AG04450 (cell line): ENCODE measurements at regions of chr2 and their contacts with region 1.

Region 1: DNA sequence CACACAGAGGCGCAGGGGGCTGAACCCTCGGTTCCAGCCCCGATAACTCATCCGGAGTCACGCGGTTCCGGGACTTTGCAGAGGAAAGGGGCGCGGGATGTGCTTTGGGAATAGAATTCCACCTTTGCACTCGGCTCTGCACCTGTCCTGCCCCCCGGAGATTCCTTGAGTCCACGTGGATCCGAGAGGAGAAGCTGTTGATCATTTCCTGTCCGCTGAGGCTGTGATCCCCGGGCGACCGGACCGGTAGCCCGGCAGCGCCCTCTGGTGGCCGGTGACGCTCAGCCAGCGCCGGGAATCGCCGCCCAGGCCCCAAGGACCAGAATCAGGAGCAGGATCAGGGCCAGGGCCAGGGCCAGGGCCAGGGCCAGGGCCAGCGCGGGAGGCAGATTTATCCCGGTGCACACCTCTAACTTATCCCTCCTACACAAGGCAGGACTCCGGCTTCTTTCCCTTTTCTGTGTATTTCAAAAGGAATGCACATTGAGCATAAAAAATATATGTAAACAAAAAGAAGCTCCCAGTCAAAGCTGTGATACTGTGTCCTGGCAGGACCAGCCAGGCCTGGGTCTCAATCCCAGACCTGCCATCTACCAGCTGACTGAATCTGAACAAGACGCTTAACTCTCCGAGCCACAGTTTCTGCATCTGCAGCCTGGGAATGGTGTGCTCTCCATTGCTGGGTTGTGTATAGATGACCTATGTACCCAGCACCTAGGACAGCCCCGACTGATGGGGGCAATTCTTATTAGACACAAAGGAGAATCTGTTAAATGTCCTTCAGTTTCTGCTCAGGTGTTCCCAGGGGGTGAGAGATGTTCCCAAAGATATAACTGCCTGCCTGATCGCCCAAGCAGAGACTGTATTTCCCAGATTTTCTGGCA is 8.5 kb upstream of the SPATA3 start:
- DNase-seq: peak; percentile 15
- H3K4me3 ChIP-seq: peak overlapping the region; percentile 56
- H3K27ac ChIP-seq: no peak overlapping the region
- H3K27me3 ChIP-seq: peaks cover 28% of the 10 kb centered on the region
- CTCF ChIP-seq: peak; percentile 91

Region 2: DNA sequence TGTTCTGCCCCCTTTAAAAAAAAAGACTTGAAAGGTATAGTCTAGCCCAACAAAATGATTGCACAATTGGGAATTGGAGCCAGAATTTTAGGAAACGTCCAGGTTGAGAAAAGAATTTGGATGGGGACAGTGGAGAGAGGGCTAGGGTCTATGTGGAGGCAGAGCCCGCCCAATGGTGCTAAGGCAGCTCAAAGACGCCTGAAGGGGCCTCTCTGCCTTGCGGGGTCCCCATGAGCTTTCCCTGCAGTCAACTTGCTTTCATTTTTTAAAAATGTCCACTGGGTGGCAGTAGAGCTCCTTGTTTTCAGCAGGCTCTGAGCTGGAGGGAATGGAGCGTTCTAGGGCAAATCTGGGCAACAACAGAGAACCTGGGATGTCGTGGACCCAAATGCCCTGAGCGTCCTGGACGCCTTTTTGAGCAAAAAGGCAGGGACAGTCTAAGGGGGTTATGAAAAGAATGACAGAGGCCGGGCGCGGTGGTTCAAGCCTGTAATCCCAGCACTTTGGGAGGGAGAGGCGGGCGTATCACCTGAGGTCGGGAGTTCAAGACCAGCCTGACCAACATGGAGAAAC is 162.9 kb before region 1 on chr2:
- CTCF ChIA-PET with region 1: interaction called, 103 read pairs
- POLR2A ChIA-PET with region 1: no interaction called
- DNase-seq: peak; percentile 70
- H3K4me3 ChIP-seq: peak overlapping the region; percentile 53
- H3K27ac ChIP-seq: no peak overlapping the region
- H3K27me3 ChIP-seq: peaks cover 19% of the 10 kb centered on the region
- CTCF ChIP-seq: peak; percentile 73

Region 3: GRCh38 chr2:230864598-230865306 is 122.6 kb before region 1 on chr2 and contains the start of gene ITM2C:
- CTCF ChIA-PET with region 1: interaction called, 12 read pairs
- POLR2A ChIA-PET with region 1: no interaction called
- DNase-seq: peak; percentile 7
- H3K4me3 ChIP-seq: peak within 1 kb of the TSS; percentile 82
- H3K27ac ChIP-seq: no peak within 1 kb of the TSS
- H3K27me3 ChIP-seq: peaks cover 28% of the 10 kb centered on the region
- CTCF ChIP-seq: peak; percentile 44
- polyA plus RNA-seq, gene ITM2C: 371 and 551 TPM in 2 replicates

Region 4: DNA sequence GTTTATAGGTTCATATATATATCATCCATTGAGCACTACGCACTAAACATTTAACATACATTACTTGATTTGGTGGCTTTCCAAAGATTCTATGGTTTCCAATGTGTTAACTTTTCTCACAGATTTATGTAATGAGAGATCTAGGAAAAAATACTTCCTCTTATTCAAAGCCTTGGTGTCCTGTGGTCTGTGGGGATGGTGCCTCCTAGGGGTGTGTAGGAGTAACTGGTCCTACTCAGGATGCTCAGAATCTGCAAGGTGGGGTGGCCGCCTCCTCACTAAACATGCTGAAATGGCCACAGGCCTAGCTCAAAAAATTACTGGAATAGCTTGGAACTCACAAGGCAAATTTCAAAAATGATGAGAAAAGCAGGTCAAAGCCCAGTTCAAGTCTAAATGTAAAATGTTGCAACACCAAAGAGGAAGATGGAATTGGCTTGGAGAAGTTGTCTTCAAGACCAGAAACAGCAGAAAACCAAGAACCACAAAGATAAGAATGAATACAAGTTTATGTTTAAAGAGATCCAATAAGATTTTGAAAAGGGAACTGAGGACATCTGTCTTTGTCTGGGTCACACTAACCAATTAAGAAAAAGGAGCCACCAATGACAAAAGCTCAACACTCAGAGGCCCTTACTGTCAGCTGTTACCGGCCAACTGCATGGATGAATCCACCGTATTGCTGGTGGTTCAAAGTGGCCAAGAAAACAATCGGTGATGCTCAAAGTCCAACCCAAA is 73.8 kb before region 1 on chr2:
- CTCF ChIA-PET with region 1: interaction called, 12 read pairs
- POLR2A ChIA-PET with region 1: no interaction called
- DNase-seq: no peak
- H3K4me3 ChIP-seq: no peak overlapping the region
- H3K27ac ChIP-seq: no peak overlapping the region
- H3K27me3 ChIP-seq: peaks cover 18% of the 10 kb centered on the region
- CTCF ChIP-seq: peak; percentile 33

Region 5: DNA sequence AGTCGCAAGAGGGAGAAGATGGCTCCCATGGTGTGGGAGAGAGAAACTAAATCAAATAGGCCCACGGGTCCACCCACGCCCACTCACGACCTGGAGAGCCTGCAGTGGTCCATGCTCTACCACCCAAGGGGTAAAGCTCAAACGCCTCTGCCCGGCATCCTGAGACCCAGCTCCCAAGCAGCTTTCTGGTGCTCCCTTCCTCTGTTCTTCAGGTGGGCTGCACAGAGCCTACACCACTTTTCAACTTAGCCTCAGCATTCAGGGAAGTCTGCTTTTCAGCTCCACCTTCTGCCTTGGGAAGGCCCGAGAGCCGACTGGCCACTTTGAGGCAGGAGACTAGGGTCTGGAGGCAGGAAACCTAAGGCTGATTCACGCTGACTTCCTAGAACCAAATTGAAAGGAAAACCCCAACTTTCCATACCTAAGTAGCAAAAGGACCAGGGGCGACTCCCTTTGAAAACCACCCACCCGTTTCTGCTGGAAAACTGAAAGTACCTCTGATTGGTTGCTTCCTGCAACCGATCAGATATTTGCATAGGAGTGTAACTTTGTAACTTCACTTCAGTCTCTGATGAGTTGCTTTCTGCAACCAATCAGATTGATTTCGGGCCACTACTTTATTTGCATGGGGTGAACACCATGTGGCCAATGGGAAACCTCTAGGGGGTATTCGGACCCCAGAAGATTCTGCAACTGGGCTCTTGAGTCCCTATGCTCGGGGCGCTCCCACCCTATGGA is 18.3 kb before region 1 on chr2:
- CTCF ChIA-PET with region 1: interaction called, 10 read pairs
- POLR2A ChIA-PET with region 1: no interaction called
- DNase-seq: no peak
- H3K4me3 ChIP-seq: no peak overlapping the region
- H3K27ac ChIP-seq: no peak overlapping the region
- H3K27me3 ChIP-seq: no peaks in the 10 kb centered on the region
- CTCF ChIP-seq: no peak